ENCODE measurements at regions of chr3 and their contacts with region 1.

Region 1: GRCh38 chr3:49519916-49520385 is 34.3 kb upstream of the BSN start:
- DNase-seq: no peak
- ATAC-seq: peak; percentile 9 to 30
- H3K4me3 ChIP-seq: no peak overlapping the region
- H3K27ac ChIP-seq: no peak overlapping the region
- H3K4me1 ChIP-seq: peaks cover 21% of the 10 kb centered on the region
- H3K27me3 ChIP-seq: no peaks in the 10 kb centered on the region

Region 2: GRCh38 chr3:49882166-49882565 is 362.2 kb after region 1 on chr3:
- intact Hi-C with region 1: loop called in 1 of 4 experiments (anchors 10 kb)
- DNase-seq: peak in 1 of 3 donors; percentile 61
- ATAC-seq: peak; percentile 46 to 63
- H3K4me3 ChIP-seq: no peak overlapping the region
- H3K27ac ChIP-seq: no peak overlapping the region
- H3K4me1 ChIP-seq: peaks cover 8% of the 10 kb centered on the region
- H3K27me3 ChIP-seq: no peaks in the 10 kb centered on the region

Measured in right cardiac atrium (tissue), 5 donors.